Activated CD4-positive, alpha-beta T cell treated with anti-CD3 and anti-CD28 coated beads for 36 hours (primary cell): ENCODE measurements at regions of chr13 and their contacts with region 1.

Region 1: DNA sequence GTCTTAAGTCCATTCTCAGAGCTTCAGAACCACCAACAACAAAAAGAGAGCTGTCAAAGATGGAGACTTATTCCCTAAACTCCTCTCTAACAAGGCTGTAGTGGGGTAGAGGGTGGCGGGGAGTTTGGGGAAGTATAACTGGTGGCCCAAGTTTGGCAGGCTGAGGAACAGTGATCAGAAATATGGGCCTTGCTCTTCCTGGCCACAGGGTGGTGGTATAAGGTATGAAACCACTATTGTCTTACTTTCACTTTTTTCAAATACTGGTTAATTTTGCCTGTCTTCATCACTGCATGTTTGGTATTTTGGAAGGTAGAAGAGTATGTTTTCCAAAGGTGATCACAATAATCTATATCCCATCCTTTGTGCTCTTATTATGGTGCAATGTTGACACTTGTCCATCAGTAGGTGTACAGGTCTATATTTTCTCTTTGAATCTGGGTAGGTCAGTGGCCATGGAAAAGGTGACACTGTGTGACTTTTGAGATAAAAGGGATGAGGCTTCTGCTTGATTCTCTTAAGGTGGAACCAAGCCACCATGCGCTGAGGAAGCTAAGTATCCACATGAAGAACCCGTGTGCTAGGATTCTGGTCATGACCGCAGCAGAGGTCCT is 23.2 kb upstream of the GPC5 start:
- DNase-seq: peak; percentile 38
- ATAC-seq: peak; percentile 93
- H3K4me3 Mint-ChIP-seq: no peak overlapping the region
- H3K27ac Mint-ChIP-seq: no peak overlapping the region
- H3K4me1 Mint-ChIP-seq: peaks cover 17% of the 10 kb centered on the region
- H3K27me3 Mint-ChIP-seq: peaks cover 6% of the 10 kb centered on the region

Region 2: GRCh38 chr13:91406619-91407018 is 31.4 kb after region 1 on chr13:
- CTCF ChIA-PET with region 1: interaction called, 6 read pairs
- POLR2A ChIA-PET with region 1: no interaction called
- intact Hi-C with region 1: loop called in 1 of 2 experiments (anchors 1 kb)
- DNase-seq: peak; percentile 30
- ATAC-seq: peak; percentile 51
- H3K4me3 Mint-ChIP-seq: no peak overlapping the region
- H3K27ac Mint-ChIP-seq: no peak overlapping the region
- H3K4me1 Mint-ChIP-seq: no peaks in the 10 kb centered on the region
- H3K27me3 Mint-ChIP-seq: peaks cover 14% of the 10 kb centered on the region

Region 3: DNA sequence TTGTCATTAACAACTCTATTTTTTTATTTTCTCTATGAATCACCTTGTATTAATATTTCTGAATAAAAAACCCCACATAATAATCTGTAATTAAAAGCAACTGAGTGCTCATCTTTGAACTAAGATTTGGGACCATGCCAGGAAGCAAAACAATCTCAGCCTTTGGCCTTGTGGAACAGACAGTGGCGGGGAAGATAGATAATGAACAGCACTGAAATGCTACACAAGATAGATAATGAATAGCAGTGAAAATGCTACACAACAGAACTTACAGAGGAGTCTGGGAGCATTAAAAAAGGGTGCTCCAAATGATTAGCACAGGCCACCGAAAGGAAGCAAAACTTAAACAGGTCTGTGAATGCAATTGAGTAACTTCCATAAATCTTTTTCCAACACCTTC is 158.1 kb after region 1 on chr13:
- CTCF ChIA-PET with region 1: no interaction called
- POLR2A ChIA-PET with region 1: no interaction called
- intact Hi-C with region 1: no loop called
- DNase-seq: no peak
- ATAC-seq: no peak
- H3K4me3 Mint-ChIP-seq: no peak overlapping the region
- H3K27ac Mint-ChIP-seq: no peak overlapping the region
- H3K4me1 Mint-ChIP-seq: no peaks in the 10 kb centered on the region
- H3K27me3 Mint-ChIP-seq: peaks cover 7% of the 10 kb centered on the region

Region 4: DNA sequence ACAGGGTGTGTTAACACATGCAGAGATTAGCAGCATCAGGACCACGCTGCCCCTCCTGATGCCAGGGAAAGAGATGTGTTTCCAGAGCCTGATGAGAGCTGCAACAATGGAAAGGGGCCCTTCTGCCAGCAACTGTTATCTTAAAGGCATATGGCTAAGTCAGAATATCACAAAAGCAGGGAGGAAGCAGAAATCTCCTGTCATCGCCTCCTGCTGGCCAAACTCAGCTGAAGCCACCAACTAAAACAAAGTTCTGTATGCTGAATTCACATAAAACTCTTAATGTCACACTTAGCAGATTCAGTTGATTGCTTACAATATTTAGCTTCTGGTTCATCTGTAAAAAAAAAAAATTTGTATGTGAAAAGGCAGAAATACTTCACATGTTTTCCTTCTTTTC is 201.4 kb after region 1 on chr13:
- CTCF ChIA-PET with region 1: no interaction called
- POLR2A ChIA-PET with region 1: no interaction called
- intact Hi-C with region 1: loop called (anchors 5 to 10 kb)
- DNase-seq: peak; percentile 12
- ATAC-seq: no peak
- H3K4me3 Mint-ChIP-seq: no peak overlapping the region
- H3K27ac Mint-ChIP-seq: no peak overlapping the region
- H3K4me1 Mint-ChIP-seq: no peaks in the 10 kb centered on the region
- H3K27me3 Mint-ChIP-seq: no peaks in the 10 kb centered on the region

Region 5: DNA sequence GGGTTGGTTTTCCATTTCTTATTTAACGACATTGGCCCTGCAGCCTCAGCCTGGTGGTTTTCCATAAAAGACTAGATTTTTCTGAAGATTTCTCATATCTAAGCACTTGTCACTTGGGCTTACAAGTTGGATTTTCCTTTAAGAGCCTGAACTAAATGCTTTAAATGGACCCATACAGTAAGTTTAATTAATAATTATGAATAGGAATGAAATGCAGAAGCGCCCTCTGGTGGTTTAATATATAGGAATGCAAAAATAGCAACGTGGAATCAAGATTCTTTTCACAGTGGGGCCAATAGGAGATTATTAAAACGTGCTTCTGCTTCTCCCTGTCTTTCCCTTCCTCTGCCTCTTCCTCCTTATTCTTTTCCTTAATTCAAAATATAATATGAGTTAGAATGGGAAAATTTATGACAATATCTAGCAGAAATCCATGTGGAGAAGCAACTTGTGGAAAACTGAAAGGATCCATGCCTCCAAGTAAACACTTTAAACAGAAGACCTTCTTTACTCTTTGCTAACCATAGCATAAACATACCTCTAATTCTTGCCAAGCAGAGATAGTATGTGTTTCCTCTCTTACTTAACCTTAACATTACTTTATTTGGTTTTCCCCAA is 347.2 kb after region 1 on chr13:
- CTCF ChIA-PET with region 1: interaction called, 4 read pairs
- POLR2A ChIA-PET with region 1: no interaction called
- intact Hi-C with region 1: loop called (anchors 2 kb)
- DNase-seq: no peak
- ATAC-seq: no peak
- H3K4me3 Mint-ChIP-seq: no peak overlapping the region
- H3K27ac Mint-ChIP-seq: no peak overlapping the region
- H3K4me1 Mint-ChIP-seq: no peaks in the 10 kb centered on the region
- H3K27me3 Mint-ChIP-seq: peaks cover 8% of the 10 kb centered on the region

Region 6: GRCh38 chr13:91863699-91864098 is 488.5 kb after region 1 on chr13:
- CTCF ChIA-PET with region 1: no interaction called
- POLR2A ChIA-PET with region 1: no interaction called
- intact Hi-C with region 1: no loop called
- DNase-seq: no peak
- ATAC-seq: no peak
- H3K4me3 Mint-ChIP-seq: no peak overlapping the region
- H3K27ac Mint-ChIP-seq: no peak overlapping the region
- H3K4me1 Mint-ChIP-seq: no peaks in the 10 kb centered on the region
- H3K27me3 Mint-ChIP-seq: no peaks in the 10 kb centered on the region

Region 7: DNA sequence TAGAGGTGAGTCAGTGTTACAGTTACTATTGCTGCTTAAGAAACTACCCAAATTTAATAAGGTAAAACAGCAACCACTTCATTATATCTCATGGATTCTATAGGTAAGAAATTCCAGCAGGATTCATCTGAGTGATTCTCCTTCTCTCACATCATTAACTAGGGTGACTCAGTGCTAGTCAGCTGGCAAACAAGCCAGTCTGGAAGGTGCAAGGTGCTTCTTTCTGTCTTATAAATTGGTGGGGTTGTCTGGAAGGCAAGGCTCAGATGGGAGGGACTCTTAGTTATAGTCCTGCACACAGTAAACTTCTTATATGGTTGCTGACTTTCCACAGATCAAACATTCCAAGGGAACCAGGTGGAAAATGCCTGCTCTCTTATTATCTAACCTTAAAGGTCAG is 507.7 kb after region 1 on chr13:
- CTCF ChIA-PET with region 1: no interaction called
- POLR2A ChIA-PET with region 1: no interaction called
- intact Hi-C with region 1: no loop called
- DNase-seq: no peak
- ATAC-seq: no peak
- H3K4me3 Mint-ChIP-seq: no peak overlapping the region
- H3K27ac Mint-ChIP-seq: no peak overlapping the region
- H3K4me1 Mint-ChIP-seq: no peaks in the 10 kb centered on the region
- H3K27me3 Mint-ChIP-seq: no peaks in the 10 kb centered on the region